MCF 10A (cell line): ENCODE measurements at regions of chr21 and their contacts with region 1.

Region 1: GRCh38 chr21:42164064-42164789 is 54.7 kb upstream of the ABCG1 start:
- DNase-seq: peak; percentile 65
- H3K4me3 Mint-ChIP-seq: no peak overlapping the region
- H3K27ac Mint-ChIP-seq: no peak overlapping the region
- H3K4me1 Mint-ChIP-seq: peaks cover under 1% of the 10 kb centered on the region
- H3K27me3 Mint-ChIP-seq: no peaks in the 10 kb centered on the region
- CTCF ChIP-seq: peak; percentile 71

Region 2: DNA sequence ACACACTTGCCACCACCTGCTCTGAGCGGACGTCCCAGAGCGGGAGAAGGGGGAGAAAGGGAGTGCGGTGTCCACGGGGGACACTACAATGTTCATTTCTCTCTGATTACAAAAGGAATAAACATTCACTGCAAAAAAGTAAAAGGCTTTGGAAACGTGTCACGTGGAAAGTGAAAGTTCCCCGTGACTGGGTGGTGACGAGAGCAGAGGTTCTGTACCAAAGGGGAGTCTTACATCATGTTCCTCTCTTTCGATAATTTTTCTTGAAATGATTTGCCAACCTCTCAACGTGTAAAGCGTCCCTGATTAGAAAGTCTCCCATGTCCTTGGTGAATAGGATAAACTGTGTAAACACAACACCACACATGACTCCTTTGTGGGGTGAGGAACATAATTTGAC is 263.1 kb before region 1 on chr21:
- CTCF ChIA-PET with region 1: no interaction called
- POLR2A ChIA-PET with region 1: no interaction called
- intact Hi-C with region 1: no loop called
- DNase-seq: no peak
- H3K4me3 Mint-ChIP-seq: no peak overlapping the region
- H3K27ac Mint-ChIP-seq: no peak overlapping the region
- H3K4me1 Mint-ChIP-seq: no peaks in the 10 kb centered on the region
- H3K27me3 Mint-ChIP-seq: no peaks in the 10 kb centered on the region
- CTCF ChIP-seq: no peak

Region 3: GRCh38 chr21:42258153-42258884 is 94.1 kb after region 1 on chr21:
- CTCF ChIA-PET with region 1: interaction called, 15 read pairs
- POLR2A ChIA-PET with region 1: no interaction called
- intact Hi-C with region 1: loop called (anchors 1 kb)
- DNase-seq: peak; percentile 67
- H3K4me3 Mint-ChIP-seq: no peak overlapping the region
- H3K27ac Mint-ChIP-seq: no peak overlapping the region
- H3K4me1 Mint-ChIP-seq: peaks cover 14% of the 10 kb centered on the region
- H3K27me3 Mint-ChIP-seq: no peaks in the 10 kb centered on the region
- CTCF ChIP-seq: peak; percentile 87

Region 4: DNA sequence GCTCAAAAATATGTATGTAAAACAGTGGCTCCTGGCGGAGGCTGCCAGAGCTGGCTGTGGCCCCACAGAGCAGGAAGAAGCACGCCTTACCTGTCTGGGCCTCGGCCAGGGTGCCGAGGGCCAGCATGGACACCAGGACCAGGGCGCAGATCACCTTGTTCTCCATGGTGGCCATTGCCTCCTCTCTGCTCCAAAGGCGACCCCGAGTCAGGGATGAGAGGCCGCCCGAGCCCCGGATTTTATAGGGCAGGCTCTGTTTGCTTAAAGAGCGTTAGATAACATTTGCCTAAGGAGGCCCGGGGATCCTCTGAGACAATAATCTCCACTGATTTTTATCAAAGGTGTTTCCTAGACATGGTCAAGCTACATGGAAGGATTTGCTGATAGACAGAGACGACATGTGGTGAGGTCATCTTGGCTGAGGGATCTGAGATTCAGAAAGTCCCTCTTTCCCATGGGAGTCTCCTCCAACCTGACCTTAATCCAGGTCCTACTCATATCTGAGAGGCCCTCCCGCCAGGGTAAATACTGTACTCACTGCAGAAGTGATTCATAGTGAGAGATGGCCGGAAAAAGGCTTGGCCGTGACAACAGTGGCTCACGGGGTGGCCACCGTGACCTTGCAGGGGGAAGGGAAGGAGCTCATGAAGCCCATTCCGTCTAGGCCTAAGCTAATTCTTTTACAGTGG is 202.2 kb after region 1 on chr21 and contains the start of gene TFF1:
- CTCF ChIA-PET with region 1: no interaction called
- POLR2A ChIA-PET with region 1: no interaction called
- intact Hi-C with region 1: no loop called
- DNase-seq: peak; percentile 25
- H3K4me3 Mint-ChIP-seq: no peak within 1 kb of the TSS
- H3K27ac Mint-ChIP-seq: no peak within 1 kb of the TSS
- H3K4me1 Mint-ChIP-seq: no peaks in the 10 kb centered on the region
- H3K27me3 Mint-ChIP-seq: peaks cover 32% of the 10 kb centered on the region
- CTCF ChIP-seq: no peak
- total RNA-seq, gene TFF1: not detected in 2 replicates

Region 5: GRCh38 chr21:42456457-42456856 is 292.2 kb after region 1 on chr21:
- CTCF ChIA-PET with region 1: no interaction called
- POLR2A ChIA-PET with region 1: no interaction called
- intact Hi-C with region 1: loop called (anchors 5 kb)
- DNase-seq: no peak
- H3K4me3 Mint-ChIP-seq: no peak overlapping the region
- H3K27ac Mint-ChIP-seq: no peak overlapping the region
- H3K4me1 Mint-ChIP-seq: no peaks in the 10 kb centered on the region
- H3K27me3 Mint-ChIP-seq: no peaks in the 10 kb centered on the region
- CTCF ChIP-seq: no peak